ENCODE measurements at regions of chr12 and their contacts with region 1.

Region 1: DNA sequence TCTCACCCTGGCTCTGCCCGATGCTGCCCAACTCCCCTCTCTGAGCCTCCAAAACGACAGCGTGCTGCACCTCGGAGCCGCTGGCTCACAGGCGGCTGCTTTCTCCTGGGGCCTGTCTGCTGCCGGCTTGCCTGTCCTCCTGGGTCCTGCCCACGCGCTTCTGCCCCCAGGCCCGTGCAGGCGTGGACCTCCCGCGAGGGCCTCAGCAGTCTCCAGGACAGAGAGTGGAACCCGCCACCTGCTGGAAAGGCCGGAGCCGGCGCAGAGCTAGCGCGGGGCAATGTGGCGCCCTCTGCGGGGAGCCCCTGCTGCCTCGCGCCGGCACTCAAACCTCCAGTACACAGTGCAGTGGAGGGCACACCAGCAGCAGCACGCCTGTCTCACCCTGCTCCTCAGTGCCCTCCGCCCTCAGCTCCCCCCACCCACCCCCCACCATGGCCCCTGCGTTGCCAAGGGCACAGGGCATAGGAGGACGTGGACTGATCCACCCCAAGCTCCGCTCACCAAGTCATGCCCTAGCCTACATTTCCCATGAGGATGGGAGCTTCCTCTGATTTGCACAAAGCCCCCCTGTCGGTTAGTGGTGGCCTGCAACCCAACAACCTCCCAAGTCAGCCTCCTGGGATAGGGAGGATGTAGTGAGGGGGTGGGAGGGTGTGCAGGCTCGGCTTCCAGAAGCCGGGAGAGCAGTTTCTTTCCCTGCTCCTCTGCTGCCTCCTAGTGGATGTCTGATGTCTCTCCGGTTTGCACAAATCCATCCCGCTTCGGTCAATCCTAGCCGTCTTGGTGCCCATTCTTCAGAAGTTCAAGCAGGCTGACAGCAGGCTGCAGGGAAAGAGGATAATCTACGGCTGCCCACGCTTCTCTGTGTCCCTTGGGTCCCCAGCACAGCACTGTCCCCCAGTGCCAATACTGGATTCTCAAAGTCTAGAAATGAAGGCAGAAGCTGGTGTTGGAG is 25.2 kb downstream of the KRT8 start:
- DNase-seq: no peak
- H3K4me3 ChIP-seq: peak overlapping the region; percentile 25 to 35
- H3K27ac ChIP-seq: peak overlapping the region; percentile 88
- H3K4me1 ChIP-seq: peaks cover 45% of the 10 kb centered on the region
- H3K27me3 ChIP-seq: no peaks in the 10 kb centered on the region
- CTCF ChIP-seq: peak; percentile 77 to 84 (median 80)
- POLR2A ChIP-seq: no peak

Region 2: GRCh38 chr12:52372216-52373154 is 507.2 kb before region 1 on chr12:
- intact Hi-C with region 1: loop called (anchors 10 kb)
- DNase-seq: no peak
- H3K4me3 ChIP-seq: no peak overlapping the region
- H3K27ac ChIP-seq: peak overlapping the region; percentile 82
- H3K4me1 ChIP-seq: peaks cover 25% of the 10 kb centered on the region
- H3K27me3 ChIP-seq: no peaks in the 10 kb centered on the region
- CTCF ChIP-seq: peak; percentile 53 to 77 (median 75)
- POLR2A ChIP-seq: no peak

Region 3: DNA sequence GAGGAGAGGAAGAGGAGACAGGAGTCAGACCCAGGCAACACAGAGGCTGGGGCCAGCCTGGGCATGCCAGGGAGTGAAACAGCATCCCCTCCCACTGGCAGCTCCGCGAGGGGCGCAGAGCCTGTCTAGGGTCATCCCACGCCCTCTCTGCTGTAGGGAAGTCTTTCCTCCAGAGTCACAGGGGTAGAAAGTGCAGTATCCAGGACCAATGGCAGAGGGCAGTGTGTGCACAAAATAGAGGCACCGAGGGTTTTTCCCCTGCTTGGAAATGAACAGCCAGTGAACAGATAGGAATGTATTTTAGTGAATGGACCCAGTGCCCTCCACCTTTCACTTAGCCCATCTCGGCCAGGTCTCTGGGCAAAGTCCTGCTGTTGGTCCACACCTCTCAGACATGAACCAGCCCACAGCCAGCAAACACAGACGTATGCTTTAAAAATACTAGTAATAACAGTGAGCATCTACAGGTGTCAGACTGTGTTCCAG is 296.7 kb before region 1 on chr12:
- intact Hi-C with region 1: loop called (anchors 5 kb)
- DNase-seq: no peak
- H3K4me3 ChIP-seq: no peak overlapping the region
- H3K27ac ChIP-seq: no peak overlapping the region
- H3K4me1 ChIP-seq: no peaks in the 10 kb centered on the region
- H3K27me3 ChIP-seq: no peaks in the 10 kb centered on the region
- CTCF ChIP-seq: peak; percentile 39 to 71 (median 63)
- POLR2A ChIP-seq: no peak